H1 (cell line): ENCODE measurements at regions of chr2 and their contacts with region 1.

Region 1: GRCh38 chr2:58448065-58448507 is 207.0 kb upstream of the FANCL start:
- DNase-seq: peak; percentile 72 to 82
- H3K4me3 ChIP-seq: no peak overlapping the region
- H3K27ac ChIP-seq: no peak overlapping the region
- H3K4me1 ChIP-seq: peaks cover 0 to 8% (median 6%) of the 10 kb centered on the region in 4 experiments; a peak in 5 of 7 replicates
- H3K27me3 ChIP-seq: no peaks in the 10 kb centered on the region
- CTCF ChIP-seq: peak; percentile 77 to 95 (median 92)
- EP300 ChIP-seq: no peak
- POLR2A ChIP-seq: no peak
- RAD21 ChIP-seq: peak; percentile 94

Region 2: DNA sequence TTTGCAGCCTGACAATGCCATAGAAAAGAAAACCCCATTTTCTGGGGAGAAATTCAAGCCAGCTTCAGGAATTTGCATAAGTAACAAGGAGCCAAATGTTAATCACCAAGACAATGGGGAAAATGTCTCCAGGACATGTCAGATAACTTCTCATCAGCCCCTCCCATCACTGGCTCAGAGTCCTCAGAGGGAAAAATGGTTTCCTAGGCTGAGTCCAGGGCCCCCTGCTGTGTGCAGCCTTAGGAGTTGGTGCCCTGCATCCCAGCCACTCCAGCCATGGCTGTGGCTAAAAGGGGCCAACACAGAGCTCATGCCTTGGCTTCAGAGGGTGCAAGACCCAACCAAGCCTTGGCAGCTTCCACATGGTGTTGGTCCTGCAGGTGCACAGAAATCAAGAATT is 143.2 kb before region 1 on chr2:
- CTCF ChIA-PET with region 1: no interaction called
- POLR2A ChIA-PET with region 1: no interaction called
- DNase-seq: no peak
- H3K4me3 ChIP-seq: no peak overlapping the region
- H3K27ac ChIP-seq: no peak overlapping the region
- H3K4me1 ChIP-seq: no peaks in the 10 kb centered on the region
- H3K27me3 ChIP-seq: no peaks in the 10 kb centered on the region
- CTCF ChIP-seq: no peak
- EP300 ChIP-seq: no peak
- POLR2A ChIP-seq: no peak
- RAD21 ChIP-seq: no peak

Region 3: GRCh38 chr2:58336416-58336815 is 111.7 kb before region 1 on chr2:
- CTCF ChIA-PET with region 1: no interaction called
- POLR2A ChIA-PET with region 1: no interaction called
- DNase-seq: no peak
- H3K4me3 ChIP-seq: no peak overlapping the region
- H3K27ac ChIP-seq: no peak overlapping the region
- H3K4me1 ChIP-seq: no peaks in the 10 kb centered on the region
- H3K27me3 ChIP-seq: no peaks in the 10 kb centered on the region
- CTCF ChIP-seq: no peak
- EP300 ChIP-seq: no peak
- POLR2A ChIP-seq: no peak
- RAD21 ChIP-seq: no peak

Region 4: DNA sequence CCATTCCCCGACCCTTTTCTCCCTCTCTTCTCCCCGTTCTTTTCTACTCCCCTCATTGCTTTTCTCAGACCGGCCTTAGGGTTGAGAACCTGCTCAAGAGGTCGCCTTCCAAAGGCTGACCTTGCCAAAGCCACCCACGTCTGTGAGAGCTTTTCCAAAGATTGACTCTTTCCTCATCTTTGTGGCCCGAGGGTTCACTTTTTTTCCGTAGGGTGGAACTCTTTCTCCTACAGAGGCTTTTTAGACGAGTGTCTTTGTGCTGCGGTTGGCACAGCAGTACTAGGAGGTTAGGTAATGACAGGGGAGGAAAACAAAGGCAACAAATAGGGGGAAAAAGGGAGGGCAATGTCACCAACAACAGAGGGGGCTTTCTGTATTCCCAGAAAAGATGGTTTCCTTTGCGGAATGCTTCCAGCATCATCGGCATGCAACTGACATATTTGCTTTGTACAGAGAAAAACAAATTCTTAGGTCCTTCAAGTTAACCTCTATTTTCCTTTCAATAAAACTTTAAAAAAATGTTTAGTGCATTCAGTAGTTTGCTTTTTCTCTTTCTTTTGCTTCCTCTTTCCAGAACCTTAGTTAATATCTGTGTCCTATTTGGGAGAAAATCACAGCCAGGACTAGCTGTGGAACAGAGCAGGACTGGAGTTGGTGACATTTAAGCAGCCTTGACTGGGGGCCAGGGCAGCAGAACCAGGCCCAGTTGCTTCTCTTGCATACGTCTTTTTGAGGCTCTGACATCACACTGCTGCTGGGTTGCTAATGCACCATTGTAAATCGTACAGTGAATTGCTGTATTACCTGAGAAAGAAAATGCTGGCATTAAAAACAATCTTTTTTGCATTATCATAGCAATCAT is 18.8 kb before region 1 on chr2:
- CTCF ChIA-PET with region 1: interaction called, 12 read pairs
- POLR2A ChIA-PET with region 1: interaction called, 4 read pairs
- DNase-seq: no peak
- H3K4me3 ChIP-seq: peak overlapping the region; percentile 63 to 75 (median 72)
- H3K27ac ChIP-seq: peak overlapping the region; percentile 90
- H3K4me1 ChIP-seq: peaks cover 0 to 11% (median 4%) of the 10 kb centered on the region in 4 experiments; a peak in 4 of 7 replicates
- H3K27me3 ChIP-seq: no peaks in the 10 kb centered on the region
- CTCF ChIP-seq: no peak
- EP300 ChIP-seq: no peak
- POLR2A ChIP-seq: no peak; a peak in 1 of 3 replicates
- RAD21 ChIP-seq: no peak

Region 5: DNA sequence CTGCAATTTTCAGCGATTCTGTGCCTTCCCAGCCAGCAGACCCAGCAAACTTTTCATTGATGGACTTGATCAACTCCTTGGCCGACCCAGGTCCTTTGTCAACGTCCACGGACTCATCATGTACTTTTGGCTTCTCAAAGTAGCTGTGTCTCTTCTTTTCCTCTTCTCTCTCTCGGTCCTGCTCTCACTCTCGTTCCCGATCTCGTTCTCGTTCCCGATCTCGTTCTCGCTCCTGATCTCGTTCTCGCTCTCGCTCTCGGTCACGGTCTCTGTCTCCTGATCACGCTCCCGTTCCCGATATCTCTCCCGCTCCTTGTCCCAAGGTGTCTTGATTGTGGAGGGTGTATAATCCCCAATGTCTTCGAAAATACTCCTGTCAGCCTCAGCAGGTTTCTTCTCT is 12.6 kb after region 1 on chr2:
- CTCF ChIA-PET with region 1: interaction called, 12 read pairs
- POLR2A ChIA-PET with region 1: interaction called, 3 read pairs
- DNase-seq: no peak
- H3K4me3 ChIP-seq: no peak overlapping the region
- H3K27ac ChIP-seq: no peak overlapping the region
- H3K4me1 ChIP-seq: no peaks in the 10 kb centered on the region
- H3K27me3 ChIP-seq: no peaks in the 10 kb centered on the region
- CTCF ChIP-seq: no peak
- EP300 ChIP-seq: no peak
- POLR2A ChIP-seq: no peak
- RAD21 ChIP-seq: no peak

Region 6: DNA sequence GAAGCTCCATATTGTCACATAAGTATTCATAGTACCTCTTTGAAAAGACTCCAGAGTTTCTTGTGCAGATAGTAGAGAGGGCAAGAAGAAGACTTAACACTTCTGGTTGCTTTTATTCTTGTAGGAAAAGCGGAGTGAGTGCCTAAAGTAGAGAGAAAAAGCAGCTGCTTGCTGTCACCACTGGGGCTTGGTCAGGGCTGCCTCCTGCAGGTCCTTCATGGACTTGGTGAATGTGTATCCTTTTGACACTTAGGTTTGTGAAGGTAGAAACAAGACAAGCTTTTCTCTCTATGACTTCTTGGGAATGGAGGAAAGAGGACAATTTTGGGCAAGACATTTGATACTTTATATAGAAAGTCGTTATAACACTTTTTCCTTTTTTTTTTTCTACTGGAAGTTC is 105.9 kb after region 1 on chr2:
- CTCF ChIA-PET with region 1: interaction called, 38 read pairs
- POLR2A ChIA-PET with region 1: no interaction called
- DNase-seq: no peak
- H3K4me3 ChIP-seq: no peak overlapping the region
- H3K27ac ChIP-seq: no peak overlapping the region
- H3K4me1 ChIP-seq: peaks cover 0 to 8% (median 2%) of the 10 kb centered on the region in 4 experiments; a peak in 4 of 7 replicates
- H3K27me3 ChIP-seq: no peaks in the 10 kb centered on the region
- CTCF ChIP-seq: peak; percentile 67 to 84 (median 72)
- EP300 ChIP-seq: no peak
- POLR2A ChIP-seq: no peak
- RAD21 ChIP-seq: peak; percentile 89 to 94

Region 7: DNA sequence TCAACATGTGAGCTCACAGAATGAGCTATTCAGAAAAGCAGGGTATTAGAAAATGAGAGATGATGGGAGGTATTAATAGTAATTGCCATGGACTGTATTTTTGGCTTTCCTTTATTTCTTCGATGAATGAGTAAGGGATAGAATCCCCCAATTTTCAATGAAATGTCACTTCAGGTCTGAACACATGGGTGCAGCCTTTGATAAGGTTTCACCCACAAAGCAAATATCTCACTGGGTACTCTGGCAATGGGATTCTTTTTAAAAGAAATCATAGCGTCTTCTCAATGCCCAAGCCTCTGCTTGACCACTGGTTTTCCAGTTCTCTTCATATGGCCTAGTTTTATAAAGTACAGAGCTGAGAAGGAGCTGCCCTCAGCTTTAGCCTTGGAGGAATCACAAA is 403.5 kb after region 1 on chr2:
- CTCF ChIA-PET with region 1: no interaction called
- POLR2A ChIA-PET with region 1: no interaction called
- DNase-seq: no peak
- H3K4me3 ChIP-seq: no peak overlapping the region
- H3K27ac ChIP-seq: no peak overlapping the region
- H3K4me1 ChIP-seq: no peaks in the 10 kb centered on the region; a peak in 2 of 7 replicates
- H3K27me3 ChIP-seq: no peaks in the 10 kb centered on the region
- CTCF ChIP-seq: no peak
- EP300 ChIP-seq: no peak
- POLR2A ChIP-seq: no peak
- RAD21 ChIP-seq: peak; percentile 44